ENCODE measurements at regions of chr17 and their contacts with region 1.

Region 1: DNA sequence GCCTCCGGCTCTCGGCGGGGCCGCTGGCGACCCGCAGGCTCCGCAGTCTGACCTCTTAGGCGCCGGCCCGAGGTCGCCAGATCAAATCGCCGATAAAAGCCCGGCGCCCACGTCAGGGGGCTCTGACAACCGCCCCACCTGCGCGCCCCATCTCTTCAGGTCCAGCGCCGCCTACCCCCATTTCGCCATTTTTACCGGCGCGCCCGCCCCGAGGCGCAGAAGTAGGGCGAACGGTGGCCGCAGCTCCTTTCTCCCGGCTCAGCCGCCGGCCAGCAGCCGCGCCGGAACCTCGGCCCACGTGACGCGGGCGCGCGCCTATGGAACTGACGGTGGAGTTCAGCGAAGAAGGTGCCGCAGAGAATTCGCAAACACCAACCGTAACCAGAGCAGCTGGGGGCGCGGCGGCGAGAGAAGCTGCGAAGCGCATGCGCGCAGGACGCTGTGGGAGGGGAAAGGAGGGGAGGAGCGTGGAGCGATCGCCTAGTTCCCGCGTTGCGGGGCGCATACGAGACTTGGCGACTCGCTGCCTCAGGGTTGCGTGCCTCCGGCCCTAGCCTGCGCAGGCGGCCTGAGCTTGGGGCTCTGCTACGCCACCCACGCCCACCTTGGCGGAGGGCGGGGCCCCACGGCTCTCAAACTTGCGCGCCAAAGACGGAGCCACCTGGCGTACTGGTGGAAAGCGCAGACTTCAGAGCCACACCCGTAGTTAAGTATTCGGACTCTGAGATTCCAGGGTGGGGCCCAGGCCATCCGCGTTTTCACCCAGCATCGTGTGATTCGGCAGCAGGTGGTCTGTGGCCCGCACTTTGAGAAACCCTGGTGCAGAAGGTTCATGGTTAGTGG is at the start of gene TRIM37:
- H3K4me3 ChIP-seq: peak within 1 kb of the TSS; percentile 83
- H3K27ac ChIP-seq: peak within 1 kb of the TSS; percentile 89
- H3K4me1 ChIP-seq: no peaks in the 10 kb centered on the region
- CTCF ChIP-seq: peak; percentile 60

Region 2: GRCh38 chr17:59093702-59094231 is 12.9 kb before region 1 on chr17:
- CTCF ChIA-PET with region 1: interaction called, 6 read pairs
- POLR2A ChIA-PET with region 1: interaction called, 68 read pairs
- H3K4me3 ChIP-seq: peak overlapping the region; percentile 27
- H3K27ac ChIP-seq: peak overlapping the region; percentile 62
- H3K4me1 ChIP-seq: peaks cover 31% of the 10 kb centered on the region
- CTCF ChIP-seq: no peak

Region 3: DNA sequence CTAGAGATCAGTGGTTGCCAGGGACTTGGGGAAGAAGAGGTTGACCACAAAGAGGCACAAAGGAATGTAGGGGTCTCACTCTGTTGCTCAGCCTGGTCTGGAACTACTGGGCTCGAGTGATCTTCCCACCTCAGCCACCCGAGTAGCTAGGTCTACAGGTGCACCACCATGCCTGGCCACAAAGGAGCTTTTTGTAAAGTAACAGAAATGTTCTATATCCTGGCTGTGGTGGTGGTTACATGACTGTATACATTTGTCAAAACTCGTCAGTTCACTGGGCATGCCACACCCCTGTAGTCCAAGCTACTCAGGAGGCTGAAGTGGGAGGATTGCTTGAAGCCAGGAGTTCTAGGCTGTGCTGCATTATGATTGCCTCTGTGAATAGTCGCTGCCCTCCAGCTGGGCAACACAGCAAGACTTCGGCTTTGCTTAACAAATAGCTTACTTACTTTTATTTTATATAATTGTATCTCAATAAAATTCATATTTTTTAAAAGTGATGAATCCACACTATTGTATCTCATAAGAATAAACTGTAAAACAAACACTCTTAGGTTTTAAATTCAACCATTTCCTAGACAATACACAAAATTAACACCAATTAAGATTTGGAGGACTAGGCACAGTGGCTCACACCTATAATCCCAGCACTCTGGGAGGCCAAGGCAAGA is 43.3 kb after region 1 on chr17:
- CTCF ChIA-PET with region 1: no interaction called
- POLR2A ChIA-PET with region 1: interaction called, 56 read pairs
- H3K4me3 ChIP-seq: no peak overlapping the region
- H3K27ac ChIP-seq: 0 out of 2 replicates have a peak overlapping the region, but pooled peaks have one; percentile 3
- H3K4me1 ChIP-seq: peaks cover 20% of the 10 kb centered on the region
- CTCF ChIP-seq: no peak

Region 4: DNA sequence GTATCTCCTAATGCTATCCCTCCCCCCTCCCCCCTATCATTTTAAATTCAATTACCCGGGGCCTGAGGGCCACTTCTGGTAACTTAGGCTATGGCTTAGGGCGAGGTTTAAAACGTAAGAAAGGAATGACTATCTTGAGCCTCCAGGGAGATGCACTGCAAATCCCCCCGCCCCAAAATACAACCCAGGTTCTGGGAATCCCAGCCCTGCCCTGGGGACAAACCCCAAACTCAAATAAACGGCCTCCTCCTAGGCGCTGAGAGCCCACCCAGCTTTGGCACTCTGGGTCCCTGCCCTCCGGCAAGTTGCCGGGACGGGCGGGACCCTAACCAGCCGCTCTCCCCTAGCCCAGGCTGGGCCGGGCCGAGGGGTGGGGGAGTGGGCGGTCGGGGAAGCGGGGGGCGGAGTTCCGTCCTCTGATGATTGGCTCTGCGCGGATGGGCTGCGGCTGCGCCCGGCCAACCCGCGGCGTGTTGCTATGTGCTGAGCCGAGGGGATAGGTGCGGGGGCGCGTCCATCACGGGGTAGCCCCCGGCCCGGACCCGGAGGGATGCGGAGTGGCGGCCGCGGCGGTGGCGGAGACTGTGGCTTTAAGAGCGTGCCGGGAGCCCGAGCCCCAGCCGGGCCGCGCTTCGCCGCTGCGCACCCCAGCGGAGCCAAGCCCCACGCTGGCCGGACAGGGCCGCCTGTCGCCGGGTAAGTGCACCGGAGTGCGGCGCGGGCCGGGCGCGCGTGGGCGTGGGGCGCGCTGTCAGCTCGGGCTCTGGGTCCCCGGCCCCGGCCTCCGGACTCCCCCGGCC is 224.6 kb after region 1 on chr17 and contains the start of gene YPEL2:
- CTCF ChIA-PET with region 1: no interaction called
- POLR2A ChIA-PET with region 1: no interaction called
- H3K4me3 ChIP-seq: peak within 1 kb of the TSS; percentile 81
- H3K27ac ChIP-seq: peak within 1 kb of the TSS; percentile 78; the same call in 1 of the 2 replicates
- H3K4me1 ChIP-seq: peaks cover 25% of the 10 kb centered on the region
- CTCF ChIP-seq: no peak

Region 5: DNA sequence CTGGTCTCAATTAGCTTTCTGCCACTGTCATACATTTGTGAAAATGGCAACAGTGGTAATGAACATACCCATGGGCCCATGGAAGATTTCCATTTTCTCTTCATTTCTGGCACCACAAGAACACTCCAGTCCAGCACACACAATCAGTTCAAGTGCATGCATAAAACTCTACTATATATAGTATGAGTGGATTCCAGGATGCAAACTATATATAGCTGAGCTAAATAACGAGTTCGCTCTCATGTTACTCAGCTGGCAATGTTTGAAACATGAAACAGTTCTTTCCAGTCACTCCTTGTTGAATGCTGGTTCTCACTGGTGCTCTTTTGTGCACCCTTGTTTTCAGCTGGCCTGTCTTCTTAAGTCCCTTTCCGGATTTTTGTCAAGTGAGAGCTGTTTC is 383.5 kb after region 1 on chr17:
- CTCF ChIA-PET with region 1: no interaction called
- POLR2A ChIA-PET with region 1: no interaction called
- H3K4me3 ChIP-seq: no peak overlapping the region
- H3K27ac ChIP-seq: no peak overlapping the region
- H3K4me1 ChIP-seq: no peaks in the 10 kb centered on the region
- CTCF ChIP-seq: no peak

Measured in HEK293 (cell line).